Thyroid gland (tissue), 4 donors: ENCODE measurements at regions of chr2 and their contacts with region 1.

Region 1: DNA sequence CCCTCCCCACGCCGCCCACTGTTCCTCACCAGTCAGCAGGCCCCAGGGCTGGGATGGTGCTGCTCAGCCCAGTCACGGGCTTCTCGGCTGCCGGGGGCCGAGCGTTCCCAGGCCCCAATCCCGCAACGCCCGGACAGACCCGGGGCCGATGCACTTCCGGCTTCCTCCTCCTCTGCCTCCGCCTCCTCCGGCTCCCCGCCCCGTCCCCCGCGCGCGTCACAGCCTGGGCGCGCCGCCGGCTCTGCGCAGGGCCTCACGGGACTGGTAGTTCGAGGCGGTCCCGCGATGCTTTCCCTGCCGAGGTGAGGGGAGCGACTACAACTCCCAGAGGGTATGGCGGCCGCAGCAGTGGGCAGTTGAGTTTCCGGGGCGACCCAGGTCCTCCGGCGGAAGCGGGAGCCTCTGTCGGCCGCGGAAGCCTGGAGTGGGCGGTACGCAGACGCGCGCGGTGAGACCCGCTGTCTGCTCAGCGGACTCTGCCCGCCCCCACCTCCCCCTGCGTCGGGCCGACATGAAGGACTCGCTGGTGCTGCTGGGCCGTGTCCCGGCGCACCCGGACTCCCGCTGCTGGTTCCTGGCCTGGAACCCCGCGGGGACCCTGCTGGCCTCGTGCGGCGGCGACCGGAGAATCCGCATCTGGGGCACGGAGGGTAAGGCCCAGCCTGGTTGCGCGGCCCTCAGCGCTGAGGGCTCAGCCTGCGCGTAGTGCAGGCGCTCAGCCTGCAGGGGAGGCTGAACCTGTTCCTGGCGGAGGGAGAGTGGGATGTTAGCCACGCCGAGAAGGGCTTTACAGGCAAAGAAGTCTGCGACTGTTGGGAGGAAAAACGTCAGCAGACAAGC is at the starts of genes CIAO1 and TMEM127:
- DNase-seq: peak; percentile 99
- H3K4me3 ChIP-seq: peak within 1 kb of the TSS; percentile 82 to 89 (median 83)
- H3K27ac ChIP-seq: peak within 1 kb of the TSS; percentile 40 to 83 (median 75)
- H3K4me1 ChIP-seq: peaks cover 25 to 33% of the 10 kb centered on the region in 2 donors
- H3K27me3 ChIP-seq: no peaks in the 10 kb centered on the region
- CTCF ChIP-seq: peak in 3 of 6 experiments; percentile 29 to 38 (median 32)
- POLR2A ChIP-seq: peak; percentile 76 to 91
- total RNA-seq, gene CIAO1: 83.8 to 149 (median 119) TPM
- total RNA-seq, gene TMEM127: 45.7 to 53.6 (median 48.7) TPM

Region 2: DNA sequence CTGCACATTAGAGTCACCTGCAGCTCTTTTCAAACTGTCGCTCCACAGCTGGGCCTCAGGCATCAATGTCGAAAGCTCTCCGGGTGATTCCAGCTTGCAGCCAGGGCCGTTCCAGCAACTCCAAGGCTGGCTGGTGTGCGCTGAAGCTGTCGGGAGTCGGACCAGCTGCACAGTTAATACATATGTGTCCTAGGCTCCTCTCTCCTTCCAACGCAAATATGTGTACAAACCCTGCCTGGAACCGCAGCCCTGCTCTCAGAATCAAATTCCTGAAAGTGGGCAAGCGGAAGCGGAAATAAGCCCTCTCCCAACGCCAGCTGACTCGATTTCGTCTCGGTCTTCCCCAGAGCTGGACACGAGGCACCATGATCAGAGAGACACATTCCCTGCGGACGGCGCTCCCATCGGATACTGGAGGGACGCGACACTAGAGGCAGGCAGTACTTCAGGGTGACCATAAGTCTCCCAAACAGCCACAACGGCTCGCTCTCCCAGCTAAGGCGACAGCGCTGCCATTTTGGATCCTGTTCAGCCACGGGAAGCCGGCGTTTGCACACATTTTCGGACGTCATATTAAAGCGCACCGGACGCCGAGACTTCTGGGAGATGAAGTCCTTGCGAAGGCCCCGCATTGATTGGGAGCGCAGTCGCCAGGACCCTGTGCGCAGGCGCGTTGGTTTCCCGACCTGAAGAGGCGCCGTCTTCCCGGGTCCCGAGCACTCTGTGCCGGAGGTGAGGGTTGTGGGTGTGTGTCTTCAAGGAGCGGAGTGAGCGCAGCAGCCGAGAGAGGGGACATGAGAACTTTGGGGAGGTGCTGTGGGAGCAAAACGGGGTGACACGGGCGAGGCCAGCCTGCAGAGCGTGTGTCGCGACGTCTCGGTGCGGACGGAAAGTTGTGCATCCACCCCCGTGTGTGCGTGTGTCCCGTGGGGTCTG is 1100.7 kb before region 1 on chr2 and contains the start of gene ZNF2:
- intact Hi-C with region 1: loop called (anchors 10 kb)
- DNase-seq: peak; percentile 98 to 99
- H3K4me3 ChIP-seq: peak within 1 kb of the TSS; percentile 56 to 82 (median 74)
- H3K27ac ChIP-seq: peak within 1 kb of the TSS; percentile 87 to 95 (median 91)
- H3K4me1 ChIP-seq: peaks cover 17 to 19% of the 10 kb centered on the region in 2 donors
- H3K27me3 ChIP-seq: no peaks in the 10 kb centered on the region
- CTCF ChIP-seq: peak in 1 of 6 experiments; percentile 16
- POLR2A ChIP-seq: peak in 1 of 2 donors; percentile 82
- total RNA-seq, gene ZNF2: 5.0 to 7.5 (median 5.7) TPM

Region 3: GRCh38 chr2:96145036-96145847 is 120.8 kb before region 1 on chr2 and contains the start of gene DUSP2:
- intact Hi-C with region 1: loop called (anchors 5 kb)
- DNase-seq: peak; percentile 67 to 75
- H3K4me3 ChIP-seq: peak within 1 kb of the TSS in 1 of 3 donors; percentile 40
- H3K27ac ChIP-seq: no peak within 1 kb of the TSS
- H3K4me1 ChIP-seq: peaks cover 7 to 30% of the 10 kb centered on the region in 2 donors
- H3K27me3 ChIP-seq: no peaks in the 10 kb centered on the region
- CTCF ChIP-seq: peak in 1 of 6 experiments; percentile 4
- POLR2A ChIP-seq: peak in 1 of 2 donors; percentile 64
- total RNA-seq, gene DUSP2: 2.2 to 8.4 (median 2.4) TPM

Region 4: DNA sequence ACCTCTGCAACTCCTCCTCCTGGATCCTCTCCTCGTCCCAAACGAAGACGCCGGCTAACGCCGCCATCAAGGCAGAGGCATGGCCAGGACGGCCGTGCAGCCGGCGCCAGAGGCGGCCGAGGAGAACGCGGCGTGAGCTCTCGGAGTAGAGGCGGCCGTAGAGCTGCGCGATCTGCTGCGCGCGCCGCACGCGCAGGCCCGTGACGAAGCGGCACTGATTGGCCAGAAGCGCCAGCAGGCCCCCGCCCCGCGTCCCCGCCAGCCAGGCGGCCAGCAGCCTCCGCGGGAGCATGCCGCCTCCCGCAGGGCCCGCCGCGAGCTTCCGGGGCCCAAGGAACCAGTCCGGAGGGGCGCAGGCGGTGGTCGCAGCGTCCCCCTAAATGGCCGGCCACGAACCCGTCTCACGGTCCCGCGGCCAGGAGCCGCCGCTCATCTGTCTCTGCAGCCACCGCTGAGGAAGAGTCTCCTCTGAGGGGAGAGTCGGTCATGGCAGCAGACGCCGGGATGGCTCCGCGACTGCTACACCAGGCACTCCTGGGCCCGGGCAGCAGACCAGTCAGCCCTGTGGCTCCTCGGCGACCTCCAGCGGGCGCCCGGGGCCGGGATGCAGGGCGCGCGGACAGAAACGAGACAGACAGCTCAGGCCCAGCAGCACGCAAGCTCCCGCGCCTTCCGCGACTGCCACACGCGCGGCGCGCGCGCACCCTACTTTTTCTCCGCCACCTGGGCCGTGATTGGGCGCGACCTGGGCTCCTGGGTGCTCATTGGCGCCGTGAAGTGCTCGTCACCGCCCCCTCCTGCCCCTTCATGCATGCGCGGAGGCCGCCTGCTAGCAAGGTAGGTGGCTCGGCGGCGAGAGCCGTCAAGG is 57.7 kb before region 1 on chr2 and contains the start of gene STARD7:
- intact Hi-C with region 1: loop called (anchors 2 kb)
- DNase-seq: peak; percentile 99
- H3K4me3 ChIP-seq: peak within 1 kb of the TSS; percentile 90 to 94 (median 93)
- H3K27ac ChIP-seq: peak within 1 kb of the TSS; percentile 94 to 98 (median 97)
- H3K4me1 ChIP-seq: peaks cover 37% of the 10 kb centered on the region in 2 donors
- H3K27me3 ChIP-seq: no peaks in the 10 kb centered on the region
- CTCF ChIP-seq: peak in 1 of 6 experiments; percentile 0
- POLR2A ChIP-seq: peak; percentile 80 to 97
- total RNA-seq, gene STARD7: 211 to 292 (median 266) TPM

Region 5: DNA sequence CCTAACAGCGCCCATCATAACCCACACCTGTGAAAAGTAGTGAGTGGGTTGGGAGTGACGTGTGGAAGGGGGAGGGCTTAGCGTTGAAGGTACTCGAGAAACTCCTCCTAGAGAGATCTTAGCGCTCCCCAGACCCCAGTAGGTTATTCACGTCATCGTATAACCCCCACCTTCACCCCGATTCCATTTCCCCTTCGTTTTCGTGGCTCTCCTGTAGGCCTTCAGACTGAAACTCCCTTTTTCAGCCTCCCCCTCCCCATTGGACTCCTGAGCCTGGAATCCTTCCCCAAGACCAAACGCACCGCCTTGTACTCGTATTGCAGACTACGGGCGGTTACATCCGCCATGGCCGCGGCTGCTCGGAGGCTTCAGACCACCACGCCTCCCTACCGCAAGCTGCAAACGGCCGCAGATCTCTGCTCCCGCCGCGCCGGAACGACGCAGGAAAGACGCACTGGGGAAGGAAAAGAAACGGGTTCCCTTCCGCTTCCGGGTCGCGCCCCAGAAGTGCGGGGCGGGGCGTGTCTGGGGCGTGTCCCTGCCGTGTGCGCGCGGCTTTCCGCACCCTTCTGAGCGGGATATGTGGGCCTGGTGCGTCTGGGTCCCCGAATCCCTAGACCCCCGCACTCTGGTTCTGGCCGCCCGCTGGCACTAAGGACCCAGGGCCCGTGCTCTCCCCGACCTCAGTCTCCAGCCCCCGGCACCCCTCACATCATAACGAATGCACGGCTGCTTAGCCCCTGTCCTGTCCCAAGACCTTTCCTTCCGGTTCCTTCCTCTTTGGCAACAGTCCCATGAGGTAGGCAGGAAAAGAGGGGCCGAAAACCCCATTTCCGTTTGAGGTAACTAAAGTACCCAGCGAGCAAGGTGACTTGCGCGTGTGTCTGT is 39.3 kb after region 1 on chr2 and contains the start of gene SNRNP200:
- intact Hi-C with region 1: loop called (anchors 2 kb)
- DNase-seq: peak; percentile 84 to 87
- H3K4me3 ChIP-seq: peak within 1 kb of the TSS; percentile 30 to 80 (median 55)
- H3K27ac ChIP-seq: peak within 1 kb of the TSS; percentile 37 to 68 (median 62)
- H3K4me1 ChIP-seq: peaks cover 7 to 14% of the 10 kb centered on the region in 2 donors
- H3K27me3 ChIP-seq: no peaks in the 10 kb centered on the region
- CTCF ChIP-seq: no peak
- POLR2A ChIP-seq: peak in 1 of 2 donors; percentile 82
- total RNA-seq, gene SNRNP200: 85.3 to 123 (median 104) TPM